Motor neuron (in vitro differentiated cells): ENCODE measurements at regions of chr15 and their contacts with region 1.

Region 1: GRCh38 chr15:80776420-80777045 is 2.6 kb upstream of the CEMIP start:
- ATAC-seq: peak in 1 of 8 experiments; percentile 0
- H3K4me3 ChIP-seq: no peak overlapping the region
- H3K27ac ChIP-seq: no peak overlapping the region
- H3K4me1 ChIP-seq: peaks cover 11 to 13% of the 10 kb centered on the region in 2 donors

Region 2: DNA sequence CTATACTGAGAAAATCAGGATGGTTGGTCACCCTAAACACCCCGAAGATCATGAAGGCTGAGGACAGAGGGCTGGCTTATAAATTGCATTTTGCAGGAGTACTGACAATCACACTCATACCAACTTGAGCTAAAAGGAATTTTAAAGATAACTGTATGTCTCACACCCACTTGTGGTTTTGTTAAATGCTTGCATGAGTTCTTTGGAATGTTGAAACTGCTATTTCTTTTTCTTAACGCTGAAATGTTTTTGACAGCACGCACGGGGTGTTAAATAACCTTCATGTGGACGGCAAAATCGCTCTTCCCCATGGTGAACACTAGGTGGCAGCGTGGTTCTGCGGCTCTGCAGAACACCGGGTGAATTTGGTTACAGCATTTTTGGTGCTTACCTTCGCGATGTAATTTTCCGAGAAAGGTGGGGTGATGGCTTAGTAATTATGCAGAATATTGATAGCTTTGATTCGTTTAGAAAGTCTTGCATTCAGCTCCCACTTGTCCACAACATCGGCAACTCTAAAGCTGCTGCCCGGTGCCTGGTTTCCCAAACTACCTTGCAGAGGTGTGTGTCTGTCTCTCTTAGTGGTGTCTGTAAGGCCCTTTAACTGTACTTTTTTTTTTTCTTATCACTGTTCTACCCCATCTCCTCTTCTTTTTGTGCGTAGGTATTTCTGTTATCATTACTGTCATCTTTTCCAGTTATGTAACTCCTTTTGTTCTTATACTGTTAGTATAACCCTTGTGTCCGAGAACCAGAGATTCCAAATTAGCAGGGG is 320.7 kb before region 1 on chr15:
- in situ Hi-C with region 1: loop called in 3 of 9 experiments (anchors 10 to 25 kb)
- ATAC-seq: peak in 7 of 8 experiments; percentile 48 to 76 (median 61)
- H3K4me3 ChIP-seq: no peak overlapping the region
- H3K27ac ChIP-seq: no peak overlapping the region
- H3K4me1 ChIP-seq: peaks cover 0 to 6% of the 10 kb centered on the region in 2 donors

Region 3: GRCh38 chr15:80567721-80568157 is 208.8 kb before region 1 on chr15:
- in situ Hi-C with region 1: loop called in 5 of 9 experiments (anchors 10 to 25 kb)
- ATAC-seq: peak; percentile 73 to 99 (median 88)
- H3K4me3 ChIP-seq: no peak overlapping the region
- H3K27ac ChIP-seq: no peak overlapping the region
- H3K4me1 ChIP-seq: no peaks in the 10 kb centered on the region